Heart left ventricle (tissue), 16 donors: ENCODE measurements at regions of chr2 and their contacts with region 1.

Region 1: GRCh38 chr2:239025096-239025801 is 177.4 kb downstream of the TWIST2 start:
- DNase-seq: peak in 2 of 5 donors; percentile 13 to 30
- ATAC-seq: no peak
- H3K4me3 ChIP-seq: no peak overlapping the region
- H3K27ac ChIP-seq: no peak overlapping the region
- H3K4me1 ChIP-seq: no peaks in the 10 kb centered on the region
- H3K27me3 ChIP-seq: peaks cover 0 to 30% (median 4%) of the 10 kb centered on the region in 9 donors
- CTCF ChIP-seq: no peak
- POLR2A ChIP-seq: no peak

Region 2: DNA sequence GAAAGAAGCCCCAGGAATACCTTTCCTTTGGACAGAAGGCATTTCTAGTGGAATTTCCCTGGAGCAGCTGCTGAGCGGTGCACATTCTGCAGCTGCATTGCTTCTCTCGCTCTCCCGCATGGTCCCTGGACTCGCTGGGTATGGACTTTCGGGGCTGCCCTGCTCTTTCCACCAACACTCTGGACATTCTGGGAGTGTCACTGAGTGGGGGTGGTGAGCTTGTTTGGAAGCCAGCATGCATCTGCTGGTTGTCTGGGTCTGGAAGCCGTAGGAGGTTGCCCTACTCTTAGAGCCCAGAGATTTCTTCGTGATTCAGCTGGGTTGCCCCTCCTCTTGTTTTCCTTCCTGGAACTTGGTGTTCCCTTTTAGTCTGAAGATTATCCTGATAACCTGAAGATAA is 124.7 kb before region 1 on chr2:
- intact Hi-C with region 1: no loop called
- DNase-seq: no peak
- ATAC-seq: no peak
- H3K4me3 ChIP-seq: no peak overlapping the region
- H3K27ac ChIP-seq: no peak overlapping the region
- H3K4me1 ChIP-seq: peaks cover 0 to 12% (median 1%) of the 10 kb centered on the region in 12 donors
- H3K27me3 ChIP-seq: peaks cover 0 to 13% (median 0%) of the 10 kb centered on the region in 9 donors
- CTCF ChIP-seq: no peak
- POLR2A ChIP-seq: no peak

Region 3: DNA sequence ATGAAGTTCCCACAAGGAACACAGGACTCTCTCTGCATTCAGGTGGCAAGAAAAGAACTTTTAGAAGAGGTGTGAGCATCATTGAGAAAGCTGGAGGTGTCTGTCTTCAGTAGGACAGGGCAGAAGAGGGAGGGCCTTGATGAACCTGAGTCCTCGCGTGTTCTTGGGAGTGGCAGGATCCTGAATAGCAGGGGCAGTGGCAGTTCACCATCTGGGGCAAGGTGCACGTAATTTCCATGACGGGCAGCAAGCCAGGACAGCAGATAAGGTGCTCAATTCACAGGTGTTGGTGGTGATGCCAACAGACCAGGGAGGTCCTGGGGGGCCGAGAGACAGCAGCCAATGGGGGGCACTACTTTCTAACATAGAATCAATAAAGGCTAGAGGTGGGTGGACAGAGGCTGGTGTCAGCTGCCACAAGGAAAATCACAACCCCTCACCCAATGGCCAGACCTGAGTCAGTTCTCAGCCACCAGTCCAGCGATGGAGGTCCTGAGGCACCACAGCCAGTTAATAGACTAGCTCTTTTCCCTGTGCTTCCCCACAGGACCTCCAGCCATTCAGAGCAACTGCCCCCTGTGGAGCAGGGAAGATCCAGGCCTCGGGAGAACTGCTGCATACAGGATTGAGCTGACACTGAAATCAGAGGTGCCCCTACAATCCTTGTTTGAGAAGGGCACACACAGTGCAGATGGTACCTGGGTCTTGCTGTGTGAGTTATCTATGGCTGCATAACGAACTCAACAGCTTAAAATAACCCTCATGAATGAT is 386.5 kb after region 1 on chr2:
- intact Hi-C with region 1: loop called in 2 of 10 experiments (anchors 10 kb)
- DNase-seq: no peak
- ATAC-seq: no peak
- H3K4me3 ChIP-seq: no peak overlapping the region
- H3K27ac ChIP-seq: no peak overlapping the region
- H3K4me1 ChIP-seq: no peaks in the 10 kb centered on the region
- H3K27me3 ChIP-seq: no peaks in the 10 kb centered on the region
- CTCF ChIP-seq: no peak
- POLR2A ChIP-seq: no peak